Naive thymus-derived CD4-positive, alpha-beta T cell (primary cell): ENCODE measurements at regions of chr6 and their contacts with region 1.

Region 1: GRCh38 chr6:35259194-35259947 is at the start of gene ZNF76:
- DNase-seq: peak; percentile 89 to 93 (median 92)
- ATAC-seq: peak; percentile 88
- H3K4me3 ChIP-seq: peak within 1 kb of the TSS; percentile 65
- H3K4me3 Mint-ChIP-seq: peak within 1 kb of the TSS; percentile 85 to 99 (median 97)
- H3K27ac ChIP-seq: peak within 1 kb of the TSS; percentile 95
- H3K27ac Mint-ChIP-seq: peak within 1 kb of the TSS; percentile 89 to 99 (median 97)
- H3K4me1 ChIP-seq: peaks cover 15 to 17% of the 10 kb centered on the region in 2 donors
- H3K4me1 Mint-ChIP-seq: peaks cover 37 to 64% (median 50%) of the 10 kb centered on the region in 7 donors
- H3K27me3 ChIP-seq: no peaks in the 10 kb centered on the region
- H3K27me3 Mint-ChIP-seq: no peaks in the 10 kb centered on the region
- total RNA-seq, gene ZNF76: 44.4 to 110 (median 77.2) TPM

Region 2: DNA sequence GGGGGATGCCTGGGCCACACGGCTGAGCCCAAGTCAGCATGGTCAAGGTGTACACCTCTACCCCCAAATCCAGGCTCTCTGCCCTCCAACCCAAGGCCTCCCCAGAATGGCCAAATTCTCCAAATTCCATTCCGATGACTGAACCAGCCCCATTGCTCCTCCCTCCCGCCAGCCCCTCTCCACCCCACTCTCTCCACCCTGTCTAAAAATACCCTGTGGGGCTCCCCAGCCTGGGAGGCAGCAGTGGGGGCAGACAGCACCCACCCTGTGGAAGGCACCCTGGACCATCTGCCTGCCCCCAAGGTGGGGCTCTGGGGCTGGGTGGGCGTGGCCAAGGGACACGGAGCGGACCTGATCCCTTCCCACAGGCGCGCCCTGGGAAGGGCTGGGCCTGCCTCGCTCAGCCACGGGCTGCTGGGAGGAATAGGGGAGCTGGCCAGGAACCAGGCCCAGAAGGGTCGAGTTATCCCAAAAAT is 226.1 kb after region 1 on chr6:
- CTCF ChIA-PET with region 1: no interaction called
- POLR2A ChIA-PET with region 1: no interaction called
- intact Hi-C with region 1: no loop called
- DNase-seq: no peak
- ATAC-seq: no peak
- H3K4me3 ChIP-seq: no peak overlapping the region
- H3K4me3 Mint-ChIP-seq: no peak overlapping the region
- H3K27ac ChIP-seq: no peak overlapping the region
- H3K27ac Mint-ChIP-seq: no peak overlapping the region
- H3K4me1 ChIP-seq: no peaks in the 10 kb centered on the region
- H3K4me1 Mint-ChIP-seq: peaks cover 0 to 10% (median 0%) of the 10 kb centered on the region in 7 donors
- H3K27me3 ChIP-seq: no peaks in the 10 kb centered on the region
- H3K27me3 Mint-ChIP-seq: peaks cover 0 to 2% (median 0%) of the 10 kb centered on the region in 5 donors

Region 3: DNA sequence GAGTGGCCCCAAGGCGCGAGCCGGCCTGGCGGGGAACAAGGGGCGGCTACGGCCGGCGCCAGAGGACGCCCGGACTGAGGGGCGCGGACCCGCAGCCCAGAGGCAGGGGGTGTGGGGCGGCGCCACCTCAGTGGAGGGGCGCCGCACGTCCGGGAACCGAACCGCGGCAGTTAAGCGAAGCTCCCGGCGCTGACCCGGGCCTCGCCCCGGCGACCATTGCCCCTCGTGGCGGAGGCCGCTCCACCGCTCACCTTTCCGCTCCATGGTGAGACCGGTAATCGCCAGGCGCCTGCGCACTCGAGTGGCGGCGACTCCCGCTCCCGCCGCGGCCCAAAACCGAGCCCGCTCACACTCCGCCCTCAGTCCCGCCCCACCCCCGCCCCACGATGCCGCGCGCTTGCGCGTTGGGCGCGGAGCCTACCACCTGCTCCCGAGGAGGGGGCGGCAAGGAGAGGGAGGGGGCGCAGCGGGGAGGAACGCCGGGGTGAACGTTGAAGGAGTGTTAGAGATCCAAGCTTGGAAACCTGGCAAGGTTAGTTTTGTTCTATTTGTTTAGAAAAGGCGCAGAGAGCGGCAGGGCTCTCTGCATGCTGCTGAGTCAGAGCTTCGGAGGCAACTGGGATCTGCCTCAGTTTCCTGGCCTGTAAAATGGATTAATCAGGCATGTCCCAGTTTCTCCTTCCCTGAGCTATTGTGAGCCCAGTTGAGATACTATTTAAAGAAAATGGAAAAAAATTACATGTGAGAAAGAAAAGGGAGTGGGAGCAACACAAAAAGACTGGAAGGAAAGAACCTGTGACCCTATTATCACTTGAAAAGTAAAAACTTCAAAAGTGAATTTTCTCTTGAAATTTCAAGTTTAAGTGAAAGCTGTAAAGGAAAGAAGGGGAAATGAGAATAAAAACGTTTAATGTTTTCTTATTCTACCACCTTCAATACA is 661.7 kb after region 1 on chr6 and contains the start of gene SRPK1:
- CTCF ChIA-PET with region 1: no interaction called
- POLR2A ChIA-PET with region 1: no interaction called
- intact Hi-C with region 1: loop called in 1 of 2 experiments (anchors 1 kb)
- DNase-seq: peak; percentile 58 to 92 (median 73)
- ATAC-seq: peak; percentile 87
- H3K4me3 ChIP-seq: peak within 1 kb of the TSS; percentile 98
- H3K4me3 Mint-ChIP-seq: peak within 1 kb of the TSS; percentile 87 to 100 (median 94)
- H3K27ac ChIP-seq: peak within 1 kb of the TSS; percentile 76
- H3K27ac Mint-ChIP-seq: peak within 1 kb of the TSS; percentile 81 to 98 (median 94)
- H3K4me1 ChIP-seq: peaks cover 12 to 28% of the 10 kb centered on the region in 2 donors
- H3K4me1 Mint-ChIP-seq: peaks cover 18 to 49% (median 41%) of the 10 kb centered on the region in 7 donors
- H3K27me3 ChIP-seq: no peaks in the 10 kb centered on the region
- H3K27me3 Mint-ChIP-seq: no peaks in the 10 kb centered on the region
- total RNA-seq, gene SRPK1: 29.1 to 80.9 (median 42.1) TPM